HEK293 (cell line): ENCODE measurements at regions of chr11 and their contacts with region 1.

Region 1: GRCh38 chr11:33857933-33858371 is 33.9 kb downstream of the LMO2 start:
- H3K4me3 ChIP-seq: no peak overlapping the region
- H3K27ac ChIP-seq: no peak overlapping the region
- H3K4me1 ChIP-seq: no peaks in the 10 kb centered on the region
- CTCF ChIP-seq: peak; percentile 58; the same call in 1 of the 2 replicates

Region 2: DNA sequence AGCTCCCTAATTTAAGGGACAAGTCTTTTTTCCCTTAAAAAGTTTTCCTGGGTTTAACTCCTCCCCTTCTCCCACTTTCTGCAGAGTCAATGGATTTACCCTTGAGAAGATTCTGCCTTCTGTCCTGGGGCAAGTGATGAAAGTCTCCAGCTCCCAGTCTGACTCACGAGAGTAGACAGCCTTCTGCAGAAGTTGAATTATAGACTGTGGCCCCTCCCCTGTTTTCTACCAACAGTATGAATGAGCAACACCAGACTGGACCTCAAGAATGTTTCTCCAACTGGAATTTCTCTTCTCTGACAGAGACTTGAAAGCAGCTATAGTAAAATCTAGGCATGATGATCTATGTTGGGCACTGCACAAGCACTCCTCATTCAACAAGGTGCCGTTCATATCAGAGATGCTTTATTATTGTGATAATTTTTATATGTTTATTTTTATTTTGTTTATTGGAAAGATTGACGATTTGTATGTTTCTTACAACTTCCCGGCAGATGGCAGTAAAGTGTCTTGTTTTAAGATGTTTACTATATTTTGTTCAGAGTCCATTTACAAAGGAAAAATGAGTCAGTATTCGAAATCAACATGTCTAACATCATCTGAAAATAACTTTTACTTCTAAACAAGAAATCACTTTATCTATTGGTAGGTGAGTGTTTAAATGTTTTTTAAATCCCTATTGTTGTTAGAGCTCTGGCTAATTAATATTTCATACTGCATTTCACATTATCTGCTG is 22.6 kb before region 1 on chr11:
- CTCF ChIA-PET with region 1: interaction called, 17 read pairs
- POLR2A ChIA-PET with region 1: no interaction called
- H3K4me3 ChIP-seq: no peak overlapping the region
- H3K27ac ChIP-seq: no peak overlapping the region
- H3K4me1 ChIP-seq: no peaks in the 10 kb centered on the region
- CTCF ChIP-seq: no peak

Region 3: GRCh38 chr11:33868647-33869461 is 10.9 kb after region 1 on chr11:
- CTCF ChIA-PET with region 1: interaction called, 20 read pairs
- POLR2A ChIA-PET with region 1: no interaction called
- H3K4me3 ChIP-seq: peak overlapping the region; percentile 46
- H3K27ac ChIP-seq: no peak overlapping the region; the same call in 1 of the 2 replicates
- H3K4me1 ChIP-seq: no peaks in the 10 kb centered on the region
- CTCF ChIP-seq: no peak

Region 4: DNA sequence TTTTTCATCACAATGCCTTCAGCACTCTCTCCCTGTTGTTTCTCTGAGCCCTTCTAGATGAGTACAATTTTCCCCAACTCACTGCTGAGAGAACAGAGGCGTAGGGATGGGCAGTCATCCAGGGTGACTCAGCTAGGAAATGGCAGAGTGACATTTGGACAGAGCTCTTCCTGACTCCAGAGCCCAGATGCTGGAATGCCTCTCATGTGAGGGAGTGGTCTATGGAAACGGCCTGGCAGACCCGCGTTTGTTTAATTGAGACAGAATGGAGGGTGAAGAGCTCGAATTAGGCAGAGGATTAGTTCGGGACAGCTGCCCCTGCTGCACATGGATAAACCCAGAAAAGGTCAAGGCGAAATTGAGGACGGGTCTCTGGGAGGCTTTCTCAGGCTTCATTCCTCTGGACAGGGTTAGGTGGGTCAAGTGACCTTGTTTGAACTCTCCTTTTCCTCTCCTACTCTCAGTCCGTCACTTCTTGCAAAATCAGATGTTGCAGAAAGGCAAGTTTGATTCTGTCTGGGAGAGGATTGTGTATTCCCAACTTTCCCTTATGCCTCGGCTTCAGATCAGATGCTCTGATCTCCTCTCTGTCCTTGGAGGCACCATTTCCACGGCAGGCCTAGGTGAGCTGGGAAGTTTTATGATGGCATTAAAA is 41.6 kb after region 1 on chr11:
- CTCF ChIA-PET with region 1: interaction called, 11 read pairs
- POLR2A ChIA-PET with region 1: no interaction called
- H3K4me3 ChIP-seq: no peak overlapping the region
- H3K27ac ChIP-seq: no peak overlapping the region
- H3K4me1 ChIP-seq: no peaks in the 10 kb centered on the region
- CTCF ChIP-seq: no peak

Region 5: GRCh38 chr11:33920838-33921613 is 63.1 kb after region 1 on chr11:
- CTCF ChIA-PET with region 1: no interaction called
- POLR2A ChIA-PET with region 1: no interaction called
- H3K4me3 ChIP-seq: no peak overlapping the region
- H3K27ac ChIP-seq: no peak overlapping the region
- H3K4me1 ChIP-seq: no peaks in the 10 kb centered on the region
- CTCF ChIP-seq: no peak

Region 6: GRCh38 chr11:33970984-33971466 is 113.1 kb after region 1 on chr11:
- CTCF ChIA-PET with region 1: interaction called, 55 read pairs
- POLR2A ChIA-PET with region 1: no interaction called
- H3K4me3 ChIP-seq: no peak overlapping the region
- H3K27ac ChIP-seq: no peak overlapping the region
- H3K4me1 ChIP-seq: no peaks in the 10 kb centered on the region
- CTCF ChIP-seq: peak; percentile 37; the same call in 1 of the 2 replicates

Region 7: GRCh38 chr11:33982661-33983060 is 124.7 kb after region 1 on chr11:
- CTCF ChIA-PET with region 1: interaction called, 40 read pairs
- POLR2A ChIA-PET with region 1: no interaction called
- H3K4me3 ChIP-seq: no peak overlapping the region
- H3K27ac ChIP-seq: no peak overlapping the region
- H3K4me1 ChIP-seq: no peaks in the 10 kb centered on the region
- CTCF ChIP-seq: no peak

Region 8: DNA sequence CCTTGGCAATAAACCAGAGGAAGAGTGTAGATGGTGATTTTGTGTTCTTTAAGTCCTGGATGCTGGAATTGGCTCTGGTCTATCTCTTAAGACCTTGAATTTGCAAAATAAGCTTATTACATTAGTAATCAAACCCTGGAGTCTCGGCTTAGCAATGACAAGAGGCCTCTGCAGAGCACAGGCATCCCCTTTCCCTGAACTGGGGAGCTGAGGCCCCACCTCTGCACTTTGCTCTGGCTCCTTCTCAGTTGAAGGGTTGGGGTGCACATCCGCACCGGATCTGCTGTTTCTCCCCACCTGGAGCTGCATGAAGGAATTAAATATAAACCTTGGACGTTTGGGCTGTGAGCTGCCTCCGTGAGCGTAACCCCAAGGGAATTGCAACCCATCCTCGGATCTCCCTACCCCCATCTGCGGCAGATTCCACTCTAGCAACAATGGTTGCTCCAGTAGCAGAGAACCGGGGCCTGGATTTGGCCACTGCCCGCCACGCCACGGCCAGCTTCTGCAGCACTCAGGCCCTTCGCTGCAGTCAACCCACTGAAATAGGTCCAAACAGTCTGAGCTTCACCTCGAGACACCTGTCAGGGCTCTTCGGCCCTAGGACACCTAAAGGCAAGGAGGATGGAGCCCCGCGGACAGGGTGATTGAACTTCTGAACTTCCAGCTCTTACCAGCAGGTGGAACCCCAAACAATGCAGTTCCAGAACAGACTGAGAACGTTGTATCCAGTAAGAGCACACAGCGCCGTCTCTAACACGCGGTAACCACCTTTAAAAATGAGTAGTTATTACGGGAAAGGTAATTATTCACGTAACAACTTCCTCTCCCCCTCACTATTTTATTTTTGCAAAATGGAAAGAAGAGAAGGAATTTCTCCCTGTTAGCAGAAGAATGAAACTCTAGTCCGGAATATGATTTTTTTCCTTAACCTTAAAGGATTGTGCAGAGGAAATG is 138.8 kb after region 1 on chr11:
- CTCF ChIA-PET with region 1: interaction called, 13 read pairs
- POLR2A ChIA-PET with region 1: no interaction called
- H3K4me3 ChIP-seq: no peak overlapping the region
- H3K27ac ChIP-seq: no peak overlapping the region
- H3K4me1 ChIP-seq: no peaks in the 10 kb centered on the region
- CTCF ChIP-seq: peak; percentile 52; the same call in 1 of the 2 replicates